ENCODE measurements at regions of chr6 and their contacts with region 1.

Region 1: GRCh38 chr6:7107578-7108195 is at the start of gene RREB1:
- DNase-seq: peak in 2 of 3 donors; percentile 56 to 67
- H3K4me3 ChIP-seq: peak within 1 kb of the TSS; percentile 85 to 98 (median 93)
- H3K4me3 Mint-ChIP-seq: peak within 1 kb of the TSS; percentile 95 to 97
- H3K27ac ChIP-seq: peak within 1 kb of the TSS; percentile 91 to 98
- H3K27ac Mint-ChIP-seq: peak within 1 kb of the TSS; percentile 92 to 98 (median 93)
- H3K4me1 ChIP-seq: peaks cover 35 to 49% of the 10 kb centered on the region in 2 donors
- H3K4me1 Mint-ChIP-seq: peaks cover 39% of the 10 kb centered on the region
- H3K27me3 ChIP-seq: no peaks in the 10 kb centered on the region
- H3K27me3 Mint-ChIP-seq: no peaks in the 10 kb centered on the region
- CTCF ChIP-seq: no peak
- polyA plus RNA-seq, gene RREB1: 2.1 to 15.3 (median 5.6) TPM

Region 2: DNA sequence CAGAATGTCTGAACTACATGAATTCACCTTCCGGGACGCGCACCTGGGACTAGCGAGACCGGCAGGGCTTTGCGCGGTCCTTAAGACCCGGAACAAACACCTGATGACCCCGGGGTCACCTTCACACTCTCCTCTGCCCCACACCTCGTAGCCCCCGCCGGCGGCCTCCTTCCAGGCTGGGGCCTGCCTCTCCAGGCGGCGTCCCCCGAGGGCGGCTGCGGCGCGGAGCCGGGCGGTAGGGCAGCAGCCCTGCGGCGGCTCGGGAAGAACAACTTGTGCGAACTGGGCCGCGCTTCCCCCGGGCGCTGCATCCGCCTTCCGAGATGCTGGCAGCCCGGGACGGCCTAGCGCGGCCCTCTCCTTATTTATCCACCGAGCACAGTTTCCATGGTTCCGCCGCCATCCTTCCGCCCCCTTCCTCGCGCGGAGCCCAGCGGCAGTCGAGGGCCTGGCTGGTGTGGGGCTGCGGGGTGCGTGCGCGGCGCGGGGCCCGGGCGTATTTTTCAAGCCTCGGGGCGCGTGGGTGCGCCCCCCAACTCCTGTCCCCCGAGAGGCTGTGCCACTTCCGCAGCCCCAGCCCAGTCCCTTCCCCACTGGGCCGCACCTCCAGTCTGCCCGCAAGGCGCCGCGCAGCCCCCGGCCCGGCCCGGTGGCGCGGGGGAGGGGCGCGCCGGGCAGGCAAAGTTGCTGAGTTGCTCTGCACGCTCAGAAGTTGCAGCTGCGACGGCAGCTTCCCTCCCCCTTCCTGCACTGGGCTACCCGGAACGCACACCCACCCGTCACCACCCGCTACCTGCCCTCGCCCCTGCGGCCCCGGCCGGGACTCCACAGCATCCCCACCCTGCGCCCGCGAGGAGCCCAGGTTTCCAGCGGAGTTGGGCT is 56.2 kb before region 1 on chr6:
- intact Hi-C with region 1: loop called in 1 of 2 experiments (anchors 5 kb)
- DNase-seq: peak; percentile 28 to 44 (median 35)
- H3K4me3 ChIP-seq: peak overlapping the region; percentile 76 to 91 (median 83)
- H3K4me3 Mint-ChIP-seq: peak overlapping the region; percentile 81 to 84
- H3K27ac ChIP-seq: peak overlapping the region; percentile 63 to 93
- H3K27ac Mint-ChIP-seq: peak overlapping the region; percentile 18 to 96 (median 80)
- H3K4me1 ChIP-seq: peaks cover 49 to 62% of the 10 kb centered on the region in 2 donors
- H3K4me1 Mint-ChIP-seq: peaks cover 53% of the 10 kb centered on the region
- H3K27me3 ChIP-seq: no peaks in the 10 kb centered on the region
- H3K27me3 Mint-ChIP-seq: peaks cover 0 to 4% (median 2%) of the 10 kb centered on the region in 3 donors
- CTCF ChIP-seq: no peak

Region 3: GRCh38 chr6:7073821-7074525 is 33.7 kb before region 1 on chr6:
- intact Hi-C with region 1: no loop called
- DNase-seq: peak; percentile 68 to 86 (median 72)
- H3K4me3 ChIP-seq: peak overlapping the region; percentile 24 to 65 (median 36)
- H3K4me3 Mint-ChIP-seq: peak overlapping the region; percentile 53 to 69
- H3K27ac ChIP-seq: peak overlapping the region; percentile 29 to 74
- H3K27ac Mint-ChIP-seq: peak overlapping the region; percentile 45 to 88 (median 78)
- H3K4me1 ChIP-seq: peaks cover 9 to 14% of the 10 kb centered on the region in 2 donors
- H3K4me1 Mint-ChIP-seq: peaks cover 14% of the 10 kb centered on the region
- H3K27me3 ChIP-seq: no peaks in the 10 kb centered on the region
- H3K27me3 Mint-ChIP-seq: no peaks in the 10 kb centered on the region
- CTCF ChIP-seq: no peak

Region 4: GRCh38 chr6:7140631-7141378 is 33.1 kb after region 1 on chr6:
- intact Hi-C with region 1: loop called (anchors 5 kb)
- DNase-seq: peak; percentile 69 to 81 (median 69)
- H3K4me3 ChIP-seq: peak overlapping the region; percentile 47 to 79 (median 53)
- H3K4me3 Mint-ChIP-seq: peak overlapping the region; percentile 75 to 87
- H3K27ac ChIP-seq: peak overlapping the region; percentile 66 to 93
- H3K27ac Mint-ChIP-seq: peak overlapping the region; percentile 86 to 95 (median 92)
- H3K4me1 ChIP-seq: peaks cover 48 to 76% of the 10 kb centered on the region in 2 donors
- H3K4me1 Mint-ChIP-seq: peaks cover 70% of the 10 kb centered on the region
- H3K27me3 ChIP-seq: no peaks in the 10 kb centered on the region
- H3K27me3 Mint-ChIP-seq: no peaks in the 10 kb centered on the region
- CTCF ChIP-seq: no peak

Region 5: GRCh38 chr6:7145885-7146828 is 38.5 kb after region 1 on chr6:
- intact Hi-C with region 1: loop called (anchors 5 kb)
- DNase-seq: peak; percentile 58 to 66 (median 65)
- H3K4me3 ChIP-seq: peak overlapping the region in 1 of 3 experiments; percentile 47
- H3K4me3 Mint-ChIP-seq: peak overlapping the region; percentile 66 to 67
- H3K27ac ChIP-seq: peak overlapping the region; percentile 83 to 87
- H3K27ac Mint-ChIP-seq: peak overlapping the region; percentile 84 to 97 (median 95)
- H3K4me1 ChIP-seq: peaks cover 38 to 63% of the 10 kb centered on the region in 2 donors
- H3K4me1 Mint-ChIP-seq: peaks cover 76% of the 10 kb centered on the region
- H3K27me3 ChIP-seq: no peaks in the 10 kb centered on the region
- H3K27me3 Mint-ChIP-seq: peaks cover 0 to 2% (median 0%) of the 10 kb centered on the region in 3 donors
- CTCF ChIP-seq: no peak

Region 6: DNA sequence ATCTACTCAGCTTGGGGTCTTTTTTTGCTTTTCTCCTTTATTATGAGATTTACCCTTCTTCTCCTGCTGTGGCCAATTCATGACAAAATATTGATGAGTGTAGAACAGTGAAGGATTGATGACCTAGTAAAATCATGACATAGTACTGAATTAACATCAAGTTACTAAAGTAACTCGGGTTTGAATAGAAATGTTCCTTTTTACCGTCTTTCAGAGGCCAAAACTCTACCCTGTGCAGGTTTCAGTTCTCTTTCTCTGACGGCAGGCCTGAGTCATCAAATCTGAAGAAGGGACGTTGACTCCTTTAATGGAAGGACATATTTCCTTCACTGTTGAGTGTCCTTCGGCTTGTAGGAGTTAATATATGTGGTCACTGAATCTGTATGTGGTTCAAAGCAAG is 80.8 kb after region 1 on chr6:
- intact Hi-C with region 1: loop called in 1 of 2 experiments (anchors 10 kb)
- DNase-seq: peak; percentile 81 to 88 (median 88)
- H3K4me3 ChIP-seq: peak overlapping the region in 1 of 3 experiments; percentile 33
- H3K4me3 Mint-ChIP-seq: peak overlapping the region in 1 of 2 donors; percentile 31
- H3K27ac ChIP-seq: peak overlapping the region; percentile 83 to 89
- H3K27ac Mint-ChIP-seq: peak overlapping the region; percentile 93 to 98 (median 97)
- H3K4me1 ChIP-seq: peaks cover 38% of the 10 kb centered on the region in 2 donors
- H3K4me1 Mint-ChIP-seq: peaks cover 39% of the 10 kb centered on the region
- H3K27me3 ChIP-seq: no peaks in the 10 kb centered on the region
- H3K27me3 Mint-ChIP-seq: no peaks in the 10 kb centered on the region
- CTCF ChIP-seq: no peak

Region 7: DNA sequence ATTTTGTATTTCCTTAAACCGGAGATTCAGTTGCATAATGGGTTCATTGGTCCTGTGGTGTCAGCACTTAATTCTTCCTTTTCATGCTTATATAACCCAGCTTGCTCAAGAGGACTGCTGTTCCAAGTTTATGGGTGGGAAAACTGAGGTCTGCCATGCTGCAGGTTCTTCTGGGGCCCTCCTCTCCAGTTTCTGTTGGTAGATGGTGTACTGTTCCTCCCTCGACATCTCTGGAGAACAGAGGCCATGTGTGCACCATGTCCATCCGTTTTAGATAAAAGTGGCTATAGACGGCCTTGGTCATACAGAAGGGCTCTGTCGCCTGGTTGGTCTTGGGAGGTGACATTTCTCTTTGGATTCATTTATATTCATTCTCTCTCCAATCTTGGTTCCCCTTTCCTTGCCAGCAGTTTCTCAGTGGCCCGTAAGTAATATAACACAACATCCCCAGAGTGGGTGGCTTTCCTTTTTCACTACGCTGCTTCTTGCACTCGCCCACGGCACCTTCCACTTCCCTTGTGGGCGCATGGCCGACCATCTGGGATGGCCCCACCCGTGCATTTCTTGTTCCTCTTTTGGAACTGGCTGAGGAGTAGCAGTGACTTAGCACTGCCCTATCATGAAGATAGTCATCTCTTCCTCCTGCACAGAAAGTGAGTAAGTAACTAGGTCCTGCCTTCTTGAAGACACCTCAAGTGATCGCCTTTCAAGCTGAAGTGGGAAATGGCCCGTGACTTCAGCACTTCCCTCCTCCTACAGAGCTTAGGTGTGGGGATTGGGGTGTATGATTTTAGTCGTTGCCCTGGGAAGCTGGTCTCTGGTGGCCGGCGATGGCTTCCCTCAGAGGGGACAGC is 94.2 kb after region 1 on chr6:
- intact Hi-C with region 1: loop called in 1 of 2 experiments (anchors 5 kb)
- DNase-seq: peak; percentile 95 to 97 (median 96)
- H3K4me3 ChIP-seq: peak overlapping the region in 2 of 3 experiments; percentile 20 to 65
- H3K4me3 Mint-ChIP-seq: peak overlapping the region; percentile 63 to 81
- H3K27ac ChIP-seq: peak overlapping the region; percentile 92 to 98
- H3K27ac Mint-ChIP-seq: peak overlapping the region; percentile 96 to 99 (median 99)
- H3K4me1 ChIP-seq: peaks cover 46 to 54% of the 10 kb centered on the region in 2 donors
- H3K4me1 Mint-ChIP-seq: peaks cover 63% of the 10 kb centered on the region
- H3K27me3 ChIP-seq: no peaks in the 10 kb centered on the region
- H3K27me3 Mint-ChIP-seq: peaks cover 0 to 4% (median 0%) of the 10 kb centered on the region in 3 donors
- CTCF ChIP-seq: no peak

Region 8: DNA sequence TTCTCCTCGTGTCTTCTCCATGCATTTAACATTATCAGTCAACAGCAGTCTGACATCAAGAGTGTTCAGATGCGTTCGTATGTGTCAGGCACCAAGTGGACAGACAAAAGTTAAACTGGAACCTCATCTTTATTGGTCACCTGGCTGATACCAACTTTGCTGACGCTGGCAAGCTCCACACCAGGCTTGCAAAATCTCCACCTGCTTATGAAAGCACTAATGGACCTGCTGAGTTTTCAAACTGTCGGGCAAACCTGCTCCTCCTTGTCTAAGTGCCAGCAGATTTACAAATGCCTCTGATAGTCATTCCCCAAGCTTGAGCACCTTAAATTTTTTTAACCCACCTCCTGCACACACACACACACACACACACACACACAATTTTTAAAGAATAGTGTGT is 405.8 kb after region 1 on chr6:
- intact Hi-C with region 1: no loop called
- DNase-seq: no peak
- H3K4me3 ChIP-seq: no peak overlapping the region
- H3K4me3 Mint-ChIP-seq: no peak overlapping the region
- H3K27ac ChIP-seq: no peak overlapping the region
- H3K27ac Mint-ChIP-seq: no peak overlapping the region
- H3K4me1 ChIP-seq: no peaks in the 10 kb centered on the region
- H3K4me1 Mint-ChIP-seq: no peaks in the 10 kb centered on the region
- H3K27me3 ChIP-seq: peaks cover 0 to 2% of the 10 kb centered on the region in 2 donors
- H3K27me3 Mint-ChIP-seq: peaks cover 5 to 18% (median 10%) of the 10 kb centered on the region in 3 donors
- CTCF ChIP-seq: no peak

Measured in CD14-positive monocyte (primary cell).